ENCODE measurements at regions of chr9 and their contacts with region 1.

Region 1: GRCh38 chr9:38362852-38363593 is 29.5 kb upstream of the ALDH1B1 start:
- DNase-seq: peak; percentile 86
- ATAC-seq: peak; percentile 81
- H3K4me3 ChIP-seq: 0 out of 2 replicates have a peak overlapping the region, but pooled peaks have one; percentile 32
- H3K27ac ChIP-seq: no peak overlapping the region
- H3K4me1 ChIP-seq: peaks cover 4% of the 10 kb centered on the region; the same call in 1 of the 2 replicates
- H3K27me3 ChIP-seq: no peaks in the 10 kb centered on the region
- CTCF ChIP-seq: peak; percentile 78

Region 2: GRCh38 chr9:37582548-37583157 is 780.4 kb before region 1 on chr9:
- CTCF ChIA-PET with region 1: no interaction called
- POLR2A ChIA-PET with region 1: no interaction called
- intact Hi-C with region 1: loop called (anchors 10 kb)
- DNase-seq: peak; percentile 67
- ATAC-seq: peak; percentile 46
- H3K4me3 ChIP-seq: no peak overlapping the region
- H3K27ac ChIP-seq: no peak overlapping the region
- H3K4me1 ChIP-seq: no peaks in the 10 kb centered on the region
- H3K27me3 ChIP-seq: no peaks in the 10 kb centered on the region
- CTCF ChIP-seq: peak; percentile 66

Region 3: DNA sequence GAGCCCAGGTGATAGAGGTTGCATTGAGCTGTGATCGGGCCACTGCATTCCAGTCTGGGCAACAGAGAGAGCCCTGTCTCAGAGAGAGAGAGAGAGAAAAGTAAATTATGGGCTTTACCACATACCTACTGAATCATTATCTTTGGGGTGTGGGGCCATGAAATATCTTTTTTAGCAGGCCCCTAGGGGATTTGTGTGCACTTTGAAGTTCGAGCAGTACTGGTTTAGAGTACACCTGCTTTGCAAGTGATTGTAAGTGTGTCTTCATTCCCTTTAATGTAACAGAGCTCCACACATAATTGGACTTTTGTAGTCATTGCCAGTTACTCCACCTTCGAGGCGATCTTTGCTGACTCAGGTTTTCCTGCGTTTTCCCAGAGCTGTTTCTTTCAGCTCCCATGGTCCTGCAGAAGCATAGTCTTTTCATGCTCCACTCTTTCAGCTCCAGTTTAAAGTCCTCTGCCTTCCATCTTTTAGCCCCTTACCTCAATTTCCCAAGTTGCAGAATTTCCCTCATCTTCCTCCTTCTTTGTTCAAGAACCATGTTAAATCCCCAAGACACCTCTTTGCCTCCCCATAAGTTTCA is 736.2 kb before region 1 on chr9:
- CTCF ChIA-PET with region 1: no interaction called
- POLR2A ChIA-PET with region 1: interaction called, 21 read pairs
- intact Hi-C with region 1: no loop called
- DNase-seq: no peak
- ATAC-seq: no peak
- H3K4me3 ChIP-seq: no peak overlapping the region
- H3K27ac ChIP-seq: no peak overlapping the region
- H3K4me1 ChIP-seq: no peaks in the 10 kb centered on the region
- H3K27me3 ChIP-seq: no peaks in the 10 kb centered on the region
- CTCF ChIP-seq: no peak

Region 4: DNA sequence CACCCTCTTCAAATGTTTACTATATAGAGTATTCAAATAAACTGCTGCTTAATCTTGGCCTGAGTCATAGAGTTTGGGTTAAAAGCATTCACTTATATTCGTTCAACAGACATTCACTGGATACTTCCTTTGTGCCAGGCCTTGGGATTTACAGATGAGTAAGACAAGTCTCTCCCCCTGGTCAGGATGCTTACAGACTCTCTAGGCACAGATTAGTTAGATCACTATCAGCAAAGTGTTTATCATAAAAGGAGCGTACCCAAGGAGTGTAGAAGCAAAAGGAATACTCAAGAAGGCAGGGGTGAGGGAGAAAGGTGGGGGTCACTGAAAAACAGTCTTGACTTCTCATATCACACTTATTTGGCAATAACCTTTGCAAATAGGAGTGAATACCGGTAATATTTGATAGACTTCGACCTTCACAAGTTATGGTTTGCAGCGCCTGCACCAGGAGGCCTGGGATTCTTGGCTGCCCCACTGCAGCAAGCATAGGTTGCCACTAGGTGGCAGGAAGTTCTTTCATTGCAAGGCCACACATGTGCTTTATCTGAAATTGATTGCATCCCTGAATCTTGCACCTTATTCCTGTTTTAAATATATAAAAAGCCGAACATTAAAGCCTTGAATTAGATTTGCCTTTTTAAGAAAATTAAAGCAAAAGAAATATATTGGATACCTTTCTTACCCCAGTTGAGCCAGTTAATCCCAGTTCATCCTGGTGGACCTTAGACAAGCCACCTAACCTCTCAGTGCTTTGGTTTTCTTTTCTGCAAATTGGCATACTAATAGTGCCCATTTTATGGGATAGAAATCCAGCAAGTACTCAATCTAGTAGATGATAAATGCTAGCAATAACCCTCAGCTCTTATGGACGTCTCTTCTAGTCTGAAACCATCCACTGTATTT is 615.9 kb before region 1 on chr9:
- CTCF ChIA-PET with region 1: no interaction called
- POLR2A ChIA-PET with region 1: no interaction called
- intact Hi-C with region 1: loop called (anchors 5 kb)
- DNase-seq: peak; percentile 69
- ATAC-seq: peak; percentile 86
- H3K4me3 ChIP-seq: no peak overlapping the region
- H3K27ac ChIP-seq: peak overlapping the region; percentile 11; the same call in 1 of the 2 replicates
- H3K4me1 ChIP-seq: peaks cover 10% of the 10 kb centered on the region
- H3K27me3 ChIP-seq: no peaks in the 10 kb centered on the region
- CTCF ChIP-seq: peak; percentile 87

Region 5: GRCh38 chr9:38068866-38069629 is 294.0 kb before region 1 on chr9 and contains the start of gene SHB:
- CTCF ChIA-PET with region 1: no interaction called
- POLR2A ChIA-PET with region 1: interaction called, 3 read pairs
- intact Hi-C with region 1: loop called (anchors 1 kb)
- DNase-seq: peak; percentile 59
- ATAC-seq: peak; percentile 41
- H3K4me3 ChIP-seq: peak within 1 kb of the TSS; percentile 95
- H3K27ac ChIP-seq: peak within 1 kb of the TSS; percentile 77
- H3K4me1 ChIP-seq: peaks cover 34% of the 10 kb centered on the region
- H3K27me3 ChIP-seq: no peaks in the 10 kb centered on the region
- CTCF ChIP-seq: 0 out of 2 replicates have a peak, but pooled peaks have one; percentile 17
- total RNA-seq, gene SHB: 56.4 and 77.1 TPM in 2 replicates

Region 6: GRCh38 chr9:38088006-38088925 is 274.8 kb before region 1 on chr9:
- CTCF ChIA-PET with region 1: no interaction called
- POLR2A ChIA-PET with region 1: no interaction called
- intact Hi-C with region 1: loop called (anchors 1 kb)
- DNase-seq: peak; percentile 59
- ATAC-seq: peak; percentile 31; the same call in 1 of the 2 replicates
- H3K4me3 ChIP-seq: no peak overlapping the region
- H3K27ac ChIP-seq: no peak overlapping the region
- H3K4me1 ChIP-seq: peaks cover 5% of the 10 kb centered on the region; the same call in 1 of the 2 replicates
- H3K27me3 ChIP-seq: no peaks in the 10 kb centered on the region
- CTCF ChIP-seq: peak; percentile 89

Region 7: DNA sequence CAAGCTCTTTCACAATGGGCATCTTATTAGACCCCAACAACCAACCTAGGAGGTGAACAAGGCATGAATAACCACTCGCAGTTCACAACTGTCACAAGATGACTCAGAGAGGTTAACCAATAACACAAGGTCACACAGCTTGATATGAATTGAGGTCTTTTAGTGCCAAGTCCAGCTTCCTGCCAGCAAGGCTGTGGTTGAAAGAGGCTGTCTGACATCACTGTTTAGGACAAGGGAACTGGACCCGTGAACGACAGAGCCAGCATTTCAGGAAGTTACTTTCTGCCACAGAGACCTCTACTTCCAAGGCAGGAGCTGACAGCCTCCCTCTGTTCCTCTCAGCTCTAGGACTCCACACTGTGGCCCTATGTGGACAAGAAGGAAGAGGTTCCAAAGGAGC is 23.9 kb before region 1 on chr9:
- CTCF ChIA-PET with region 1: no interaction called
- POLR2A ChIA-PET with region 1: no interaction called
- intact Hi-C with region 1: no loop called
- DNase-seq: peak; percentile 53
- ATAC-seq: no peak; the same call in 1 of the 2 replicates
- H3K4me3 ChIP-seq: no peak overlapping the region
- H3K27ac ChIP-seq: no peak overlapping the region
- H3K4me1 ChIP-seq: 0 out of 2 replicates have a peak, but pooled peaks cover 3% of the 10 kb centered on the region
- H3K27me3 ChIP-seq: no peaks in the 10 kb centered on the region
- CTCF ChIP-seq: no peak

Measured in PC-3 (cell line).